ENCODE measurements at regions of chr1 and their contacts with region 1.

Region 1: DNA sequence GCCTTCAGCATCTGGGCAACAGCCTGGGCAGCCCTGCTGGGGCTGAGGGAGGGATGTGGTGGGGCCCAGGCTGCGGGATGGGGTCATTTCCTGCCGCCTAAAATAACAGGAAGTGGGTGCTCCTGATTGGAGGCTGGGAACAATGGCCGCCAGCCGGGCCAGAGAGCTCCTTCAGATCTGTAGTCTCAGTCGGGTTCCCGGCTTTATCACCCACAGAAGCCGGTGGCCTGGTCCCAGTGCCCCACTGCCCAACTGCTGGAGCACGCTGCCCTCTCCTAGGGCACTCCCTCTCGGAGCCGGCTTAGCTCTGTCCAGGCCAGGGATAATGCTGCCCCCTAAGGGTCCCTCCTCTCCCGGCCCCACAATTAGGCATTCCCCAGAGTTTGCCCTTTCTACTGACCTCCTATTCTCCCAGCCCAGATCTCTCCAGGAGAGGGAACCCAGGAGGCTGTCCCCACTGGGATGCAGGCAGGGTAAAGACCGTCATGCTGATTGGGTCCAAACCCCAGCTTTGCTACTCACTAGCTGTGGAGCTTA is 5.1 kb downstream of the MAP7D1 start:
- DNase-seq: peak; percentile 71
- ATAC-seq: peak; percentile 76
- H3K4me3 Mint-ChIP-seq: peak overlapping the region; percentile 67
- H3K27ac Mint-ChIP-seq: peak overlapping the region; percentile 88
- H3K4me1 Mint-ChIP-seq: peaks cover 41% of the 10 kb centered on the region
- H3K27me3 Mint-ChIP-seq: no peaks in the 10 kb centered on the region
- CTCF ChIP-seq: no peak

Region 2: DNA sequence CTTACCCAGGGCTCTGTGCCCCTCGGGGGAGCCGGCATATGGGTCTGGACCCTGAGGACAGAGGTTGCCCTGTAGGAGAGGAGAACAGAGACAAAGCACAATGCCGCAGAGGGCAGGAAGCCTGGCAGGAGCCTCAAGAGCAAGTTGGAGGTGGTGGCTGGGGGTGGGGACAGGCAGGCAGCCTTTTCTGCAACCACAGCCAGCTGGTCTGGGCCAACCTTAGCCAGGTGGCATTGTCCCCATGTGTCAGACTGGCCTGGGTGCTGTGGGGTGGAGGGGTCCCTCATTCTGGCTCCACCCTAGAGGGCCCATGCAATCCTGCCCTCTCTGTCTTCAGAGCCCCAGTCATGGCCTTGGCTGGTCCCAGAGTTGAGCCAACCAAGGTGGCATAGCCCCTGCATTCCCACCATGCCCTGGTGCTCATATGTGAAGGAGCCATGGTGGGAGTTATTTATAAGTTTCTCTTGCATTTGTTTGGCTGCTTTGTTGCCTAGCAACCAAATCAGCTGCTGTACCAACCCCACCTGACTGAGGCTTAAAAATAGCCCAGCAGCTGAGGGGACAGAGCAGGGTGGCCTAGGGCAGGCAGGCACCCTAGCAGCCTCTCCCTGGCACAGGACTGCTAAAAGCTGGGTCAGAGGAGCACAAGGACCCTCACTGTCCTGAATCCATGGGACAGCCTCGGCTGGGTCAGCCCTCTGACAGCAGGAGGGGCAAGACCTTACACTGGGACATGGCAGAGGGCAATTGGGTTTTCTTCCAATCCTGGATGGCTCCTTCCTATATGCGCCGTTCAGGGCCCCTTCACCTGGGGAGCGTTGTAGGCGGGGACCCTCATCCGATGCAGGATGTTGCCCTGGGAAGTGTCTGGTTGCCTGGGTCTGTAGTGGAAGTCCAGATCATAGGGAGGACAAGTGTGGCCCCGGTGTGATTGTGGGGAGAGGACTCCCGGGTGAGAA is 14.4 kb after region 1 on chr1:
- CTCF ChIA-PET with region 1: interaction called, 16 read pairs
- POLR2A ChIA-PET with region 1: interaction called, 12 read pairs
- DNase-seq: no peak
- ATAC-seq: no peak
- H3K4me3 Mint-ChIP-seq: peak overlapping the region; percentile 41
- H3K27ac Mint-ChIP-seq: no peak overlapping the region; the same call in 1 of the 2 replicates
- H3K4me1 Mint-ChIP-seq: peaks cover 22% of the 10 kb centered on the region
- H3K27me3 Mint-ChIP-seq: no peaks in the 10 kb centered on the region
- CTCF ChIP-seq: no peak

Region 3: GRCh38 chr1:36223993-36224536 is 63.0 kb after region 1 on chr1 and contains the start of gene THRAP3:
- CTCF ChIA-PET with region 1: interaction called, 15 read pairs
- POLR2A ChIA-PET with region 1: interaction called, 5 read pairs
- DNase-seq: peak; percentile 100
- ATAC-seq: peak; percentile 95
- H3K4me3 Mint-ChIP-seq: peak within 1 kb of the TSS; percentile 97
- H3K27ac Mint-ChIP-seq: peak within 1 kb of the TSS; percentile 100
- H3K4me1 Mint-ChIP-seq: peaks cover 16% of the 10 kb centered on the region
- H3K27me3 Mint-ChIP-seq: no peaks in the 10 kb centered on the region
- CTCF ChIP-seq: no peak
- total RNA-seq, gene THRAP3: 150 to 160 TPM (median 153 TPM) in 3 replicates

Region 4: DNA sequence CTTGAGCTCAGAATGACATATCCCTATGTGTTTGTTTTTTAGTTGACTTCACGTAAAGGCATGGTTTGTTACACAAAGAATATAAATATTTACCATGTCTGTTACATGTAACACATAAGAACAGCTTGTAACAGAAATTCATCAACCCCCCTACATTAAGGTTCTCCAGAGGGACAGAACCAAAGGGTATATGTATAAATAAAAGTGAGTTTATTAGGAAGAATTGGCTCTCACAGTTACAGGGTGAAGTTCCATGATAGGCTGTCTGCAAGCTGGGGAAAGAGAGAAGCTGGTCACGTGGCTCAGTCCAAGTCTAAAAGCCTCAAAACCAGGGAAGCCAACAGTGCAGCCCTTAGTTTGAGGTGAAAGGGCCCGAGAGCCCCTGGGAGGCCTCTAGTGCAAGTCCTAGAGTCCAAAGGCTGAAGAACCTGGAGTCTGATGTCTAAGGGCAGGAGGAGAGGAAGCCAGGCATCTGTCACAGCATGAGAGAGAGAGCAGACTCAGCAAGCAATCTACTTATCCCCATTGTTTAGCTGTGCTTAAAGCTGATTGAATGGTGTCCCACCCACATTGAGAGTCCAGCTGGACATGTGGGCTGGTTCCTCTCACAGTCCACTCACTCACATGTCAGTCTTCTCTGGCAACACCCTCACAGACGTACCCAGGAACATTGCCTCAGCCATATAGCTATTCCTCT is 79.1 kb after region 1 on chr1:
- CTCF ChIA-PET with region 1: no interaction called
- POLR2A ChIA-PET with region 1: no interaction called
- DNase-seq: no peak
- ATAC-seq: peak; percentile 41; the same call in 1 of the 2 replicates
- H3K4me3 Mint-ChIP-seq: no peak overlapping the region
- H3K27ac Mint-ChIP-seq: peak overlapping the region; percentile 93; the same call in 1 of the 2 replicates
- H3K4me1 Mint-ChIP-seq: peaks cover 19% of the 10 kb centered on the region; the same call in 1 of the 2 replicates
- H3K27me3 Mint-ChIP-seq: no peaks in the 10 kb centered on the region
- CTCF ChIP-seq: no peak

Region 5: GRCh38 chr1:36528361-36529349 is 367.6 kb after region 1 on chr1:
- CTCF ChIA-PET with region 1: no interaction called
- POLR2A ChIA-PET with region 1: no interaction called
- DNase-seq: peak; percentile 42
- ATAC-seq: peak; percentile 86
- H3K4me3 Mint-ChIP-seq: no peak overlapping the region
- H3K27ac Mint-ChIP-seq: no peak overlapping the region
- H3K4me1 Mint-ChIP-seq: peaks cover 19% of the 10 kb centered on the region
- H3K27me3 Mint-ChIP-seq: peaks cover 4% of the 10 kb centered on the region
- CTCF ChIP-seq: no peak